ENCODE measurements at regions of chr3 and their contacts with region 1.

Region 1: GRCh38 chr3:9352917-9353752 is 9.7 kb upstream of the THUMPD3 start:
- DNase-seq: peak; percentile 87
- H3K4me3 Mint-ChIP-seq: no peak overlapping the region
- H3K27ac Mint-ChIP-seq: no peak overlapping the region
- H3K4me1 Mint-ChIP-seq: peaks cover 15% of the 10 kb centered on the region
- H3K27me3 Mint-ChIP-seq: no peaks in the 10 kb centered on the region

Region 2: DNA sequence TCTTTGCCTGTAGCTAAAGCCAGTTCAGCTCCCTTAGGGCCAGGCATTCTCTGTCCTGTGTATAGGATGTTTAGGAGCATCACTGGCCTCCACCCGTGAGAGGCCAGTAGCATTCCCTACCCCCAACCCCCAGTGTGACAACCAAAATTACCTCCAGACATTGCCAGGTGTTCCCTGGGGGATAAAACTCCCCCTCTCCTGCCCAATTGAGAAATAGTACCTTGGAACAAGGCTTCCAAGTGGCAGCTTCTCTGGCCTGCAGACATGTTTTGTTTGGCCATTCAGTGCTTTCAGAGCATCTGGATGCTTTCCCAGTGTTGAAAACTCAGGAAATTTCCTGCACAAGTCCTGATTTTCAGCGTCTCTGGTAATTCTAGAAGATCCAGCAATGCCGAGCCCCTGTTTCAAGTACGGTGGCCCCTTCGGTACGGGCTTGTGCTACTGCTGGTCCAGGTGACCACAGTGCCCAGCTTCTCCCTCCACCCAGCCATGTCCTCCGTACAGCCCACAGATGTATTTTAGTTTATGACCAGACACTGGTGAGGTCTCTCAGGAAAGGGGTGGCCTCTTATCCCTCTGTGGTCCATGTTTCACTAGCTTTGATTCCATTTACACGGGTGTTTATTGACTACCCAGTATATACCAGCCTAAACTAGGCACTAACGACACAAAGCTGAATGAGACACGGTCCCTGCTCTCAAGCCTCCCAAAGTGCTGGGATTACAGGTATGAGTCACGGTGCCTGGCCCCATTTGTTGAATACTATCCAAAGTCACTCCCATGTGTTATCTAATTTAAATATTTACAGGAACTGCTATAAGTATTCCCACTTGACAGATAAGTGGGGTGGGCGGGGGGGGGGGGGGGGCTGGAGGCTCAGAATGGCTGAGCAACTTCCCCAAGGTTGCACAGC is 264.4 kb before region 1 on chr3:
- intact Hi-C with region 1: no loop called
- DNase-seq: no peak
- H3K4me3 Mint-ChIP-seq: no peak overlapping the region
- H3K27ac Mint-ChIP-seq: no peak overlapping the region
- H3K4me1 Mint-ChIP-seq: no peaks in the 10 kb centered on the region
- H3K27me3 Mint-ChIP-seq: peaks cover 3% of the 10 kb centered on the region

Region 3: GRCh38 chr3:9422712-9423424 is 69.7 kb after region 1 on chr3:
- intact Hi-C with region 1: loop called (anchors 2 kb)
- DNase-seq: no peak
- H3K4me3 Mint-ChIP-seq: no peak overlapping the region
- H3K27ac Mint-ChIP-seq: peak overlapping the region; percentile 65
- H3K4me1 Mint-ChIP-seq: peaks cover 33% of the 10 kb centered on the region
- H3K27me3 Mint-ChIP-seq: no peaks in the 10 kb centered on the region

Region 4: DNA sequence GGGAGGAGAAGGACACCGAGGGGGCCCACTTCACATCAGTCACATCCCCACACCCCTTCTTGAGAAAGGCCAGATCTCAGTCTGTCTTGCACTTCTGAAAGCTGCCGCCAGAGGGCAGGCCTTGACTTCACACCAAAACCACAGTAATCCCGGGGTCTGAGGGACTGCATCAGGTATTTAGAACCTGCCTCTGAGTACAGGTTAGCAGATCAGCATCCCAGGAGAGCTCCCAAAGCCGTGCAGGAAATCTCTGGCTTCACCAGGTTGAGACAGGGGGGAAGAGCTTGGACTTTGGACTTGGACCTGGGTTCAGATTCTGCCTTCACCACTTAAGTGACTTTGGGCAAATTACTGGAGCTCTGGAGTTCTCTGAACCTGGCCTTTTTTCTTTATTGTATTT is 150.1 kb after region 1 on chr3:
- intact Hi-C with region 1: loop called (anchors 5 kb)
- DNase-seq: peak; percentile 92
- H3K4me3 Mint-ChIP-seq: no peak overlapping the region
- H3K27ac Mint-ChIP-seq: no peak overlapping the region
- H3K4me1 Mint-ChIP-seq: peaks cover 7% of the 10 kb centered on the region
- H3K27me3 Mint-ChIP-seq: peaks cover 32% of the 10 kb centered on the region